Naive thymus-derived CD4-positive, alpha-beta T cell (primary cell): ENCODE measurements at regions of chr13 and their contacts with region 1.

Region 1: DNA sequence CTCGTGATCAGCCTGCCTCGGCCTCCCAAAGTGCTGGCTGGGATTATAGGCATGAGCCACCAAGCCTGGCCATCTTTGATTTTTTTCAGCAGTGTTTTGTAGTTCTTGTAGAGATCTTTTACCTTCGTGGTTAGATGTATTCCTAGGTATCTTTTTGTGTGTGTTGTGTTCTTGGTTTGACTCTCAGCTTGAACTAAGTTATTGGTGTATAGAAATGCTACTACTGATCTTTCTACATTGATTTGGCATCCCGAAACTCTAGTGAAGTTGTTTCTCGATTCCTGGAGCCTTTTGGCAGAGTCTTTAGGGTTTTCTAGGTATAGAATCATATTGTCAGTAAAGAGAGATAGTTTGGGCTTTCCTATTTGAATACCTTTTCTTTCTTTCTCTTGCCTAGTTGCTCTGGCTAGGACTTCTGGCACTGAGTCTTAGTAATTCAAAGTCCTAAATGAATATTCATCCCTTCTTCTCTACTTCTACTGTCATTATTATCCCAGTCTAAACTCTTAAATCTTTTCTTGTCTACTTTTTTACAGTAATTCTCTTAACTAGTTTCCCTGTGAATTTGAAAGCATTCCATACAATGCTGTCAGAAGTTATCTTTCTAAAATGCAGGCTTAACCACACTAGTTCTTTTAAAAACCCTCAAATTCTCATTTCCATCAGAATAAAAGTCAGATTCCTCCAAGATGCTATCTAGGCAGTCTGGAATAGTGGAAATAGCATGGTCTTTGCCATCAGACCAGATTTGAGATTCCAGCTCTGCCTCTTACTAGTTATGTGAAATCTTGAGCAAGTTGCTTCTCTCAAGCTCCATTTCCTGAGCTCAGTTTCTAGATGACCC is 7.0 kb downstream of the GPR18 start:
- DNase-seq: no peak
- ATAC-seq: no peak
- H3K4me3 ChIP-seq: no peak overlapping the region
- H3K4me3 Mint-ChIP-seq: peak overlapping the region in 7 of 10 donors; percentile 2 to 64 (median 30)
- H3K27ac ChIP-seq: peak overlapping the region; percentile 48
- H3K27ac Mint-ChIP-seq: peak overlapping the region; percentile 26 to 94 (median 78)
- H3K4me1 ChIP-seq: peaks cover 19 to 30% of the 10 kb centered on the region in 2 donors
- H3K4me1 Mint-ChIP-seq: peaks cover 37 to 73% (median 70%) of the 10 kb centered on the region in 7 donors
- H3K27me3 ChIP-seq: no peaks in the 10 kb centered on the region
- H3K27me3 Mint-ChIP-seq: no peaks in the 10 kb centered on the region

Region 2: DNA sequence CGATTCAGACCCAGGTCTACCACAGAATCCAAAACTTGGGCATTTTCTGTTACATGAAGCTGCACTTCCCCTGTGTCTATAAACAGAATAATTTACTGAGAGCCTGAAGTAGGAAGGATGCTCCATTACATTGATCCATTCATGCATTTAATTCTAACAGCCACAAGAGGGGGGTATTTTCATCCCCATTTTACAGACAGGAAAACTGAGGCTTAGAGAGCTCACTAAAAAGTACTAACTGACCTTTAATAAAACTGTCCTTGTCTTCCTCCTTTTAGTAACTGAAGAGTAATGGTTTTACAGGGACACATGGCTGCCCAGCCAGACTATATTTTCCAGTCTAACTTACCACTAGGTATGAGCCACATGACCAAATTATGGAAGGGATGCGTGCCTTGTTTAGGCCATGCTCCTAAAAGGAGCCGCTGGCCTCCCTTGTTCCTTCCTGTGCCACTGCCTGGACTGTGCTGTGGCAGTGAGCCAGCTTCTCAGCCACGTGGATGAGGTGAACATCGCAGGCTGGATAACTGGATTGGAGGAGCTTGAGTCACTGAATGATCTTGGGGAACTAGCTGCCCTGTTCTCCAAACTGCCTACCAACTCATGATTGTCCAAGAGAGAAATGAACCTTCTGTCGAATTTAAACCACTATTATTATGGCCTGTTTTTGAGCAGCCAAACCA is 381.7 kb before region 1 on chr13:
- CTCF ChIA-PET with region 1: no interaction called
- POLR2A ChIA-PET with region 1: no interaction called
- intact Hi-C with region 1: no loop called
- DNase-seq: peak in 1 of 9 donors; percentile 3
- ATAC-seq: no peak
- H3K4me3 ChIP-seq: no peak overlapping the region
- H3K4me3 Mint-ChIP-seq: no peak overlapping the region
- H3K27ac ChIP-seq: no peak overlapping the region
- H3K27ac Mint-ChIP-seq: peak overlapping the region in 3 of 9 donors; percentile 11 to 57 (median 23)
- H3K4me1 ChIP-seq: no peaks in the 10 kb centered on the region
- H3K4me1 Mint-ChIP-seq: peaks cover 0 to 33% (median 17%) of the 10 kb centered on the region in 7 donors
- H3K27me3 ChIP-seq: no peaks in the 10 kb centered on the region
- H3K27me3 Mint-ChIP-seq: no peaks in the 10 kb centered on the region

Region 3: GRCh38 chr13:99228737-99229691 is 22.2 kb before region 1 on chr13:
- CTCF ChIA-PET with region 1: interaction called, 4 read pairs
- POLR2A ChIA-PET with region 1: interaction called, 12 read pairs
- intact Hi-C with region 1: no loop called
- DNase-seq: no peak
- ATAC-seq: peak; percentile 48
- H3K4me3 ChIP-seq: peak overlapping the region; percentile 43
- H3K4me3 Mint-ChIP-seq: peak overlapping the region; percentile 60 to 86 (median 80)
- H3K27ac ChIP-seq: peak overlapping the region; percentile 35
- H3K27ac Mint-ChIP-seq: peak overlapping the region; percentile 55 to 94 (median 80)
- H3K4me1 ChIP-seq: peaks cover 55 to 60% of the 10 kb centered on the region in 2 donors
- H3K4me1 Mint-ChIP-seq: peaks cover 56 to 89% (median 70%) of the 10 kb centered on the region in 7 donors
- H3K27me3 ChIP-seq: no peaks in the 10 kb centered on the region
- H3K27me3 Mint-ChIP-seq: no peaks in the 10 kb centered on the region

Region 4: GRCh38 chr13:99237981-99238662 is 13.1 kb before region 1 on chr13:
- CTCF ChIA-PET with region 1: interaction called, 3 read pairs
- POLR2A ChIA-PET with region 1: interaction called, 23 read pairs
- intact Hi-C with region 1: loop called (anchors 1 kb)
- DNase-seq: peak in 4 of 9 donors; percentile 19 to 40 (median 30)
- ATAC-seq: peak; percentile 74
- H3K4me3 ChIP-seq: peak overlapping the region; percentile 26
- H3K4me3 Mint-ChIP-seq: peak overlapping the region; percentile 74 to 95 (median 85)
- H3K27ac ChIP-seq: peak overlapping the region; percentile 81
- H3K27ac Mint-ChIP-seq: peak overlapping the region; percentile 86 to 100 (median 97)
- H3K4me1 ChIP-seq: peaks cover 11 to 20% of the 10 kb centered on the region in 2 donors
- H3K4me1 Mint-ChIP-seq: peaks cover 35 to 81% (median 72%) of the 10 kb centered on the region in 7 donors
- H3K27me3 ChIP-seq: no peaks in the 10 kb centered on the region
- H3K27me3 Mint-ChIP-seq: no peaks in the 10 kb centered on the region

Region 5: DNA sequence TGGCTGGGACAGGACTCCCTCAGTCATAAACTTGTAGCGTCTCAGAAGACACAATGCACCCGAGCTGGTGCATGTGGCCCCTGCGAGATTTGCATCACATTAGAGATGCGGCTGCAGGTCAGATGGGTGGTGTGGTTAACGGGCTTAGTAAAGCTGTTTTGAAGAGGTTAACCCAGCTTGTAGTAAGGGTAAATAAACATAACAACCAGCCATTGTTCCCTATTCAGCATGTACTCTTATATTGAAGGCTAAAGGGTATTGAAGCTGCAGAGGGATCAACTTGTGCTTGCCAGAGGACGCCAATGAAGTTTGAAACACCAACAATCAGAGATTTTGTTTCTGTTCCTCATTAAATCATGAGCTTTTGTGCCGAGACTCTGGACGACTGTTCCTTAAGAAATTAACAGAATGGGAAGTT is 641.0 kb after region 1 on chr13:
- CTCF ChIA-PET with region 1: no interaction called
- POLR2A ChIA-PET with region 1: no interaction called
- intact Hi-C with region 1: no loop called
- DNase-seq: no peak
- ATAC-seq: no peak
- H3K4me3 ChIP-seq: no peak overlapping the region
- H3K4me3 Mint-ChIP-seq: no peak overlapping the region
- H3K27ac ChIP-seq: no peak overlapping the region
- H3K27ac Mint-ChIP-seq: no peak overlapping the region
- H3K4me1 ChIP-seq: peaks cover 7% of the 10 kb centered on the region in 2 donors
- H3K4me1 Mint-ChIP-seq: peaks cover 7 to 24% (median 16%) of the 10 kb centered on the region in 7 donors
- H3K27me3 ChIP-seq: peaks cover 6 to 18% of the 10 kb centered on the region in 2 donors
- H3K27me3 Mint-ChIP-seq: peaks cover 23 to 50% (median 26%) of the 10 kb centered on the region in 5 donors